OCI-LY7 (cell line): ENCODE measurements at regions of chr17 and their contacts with region 1.

Region 1: DNA sequence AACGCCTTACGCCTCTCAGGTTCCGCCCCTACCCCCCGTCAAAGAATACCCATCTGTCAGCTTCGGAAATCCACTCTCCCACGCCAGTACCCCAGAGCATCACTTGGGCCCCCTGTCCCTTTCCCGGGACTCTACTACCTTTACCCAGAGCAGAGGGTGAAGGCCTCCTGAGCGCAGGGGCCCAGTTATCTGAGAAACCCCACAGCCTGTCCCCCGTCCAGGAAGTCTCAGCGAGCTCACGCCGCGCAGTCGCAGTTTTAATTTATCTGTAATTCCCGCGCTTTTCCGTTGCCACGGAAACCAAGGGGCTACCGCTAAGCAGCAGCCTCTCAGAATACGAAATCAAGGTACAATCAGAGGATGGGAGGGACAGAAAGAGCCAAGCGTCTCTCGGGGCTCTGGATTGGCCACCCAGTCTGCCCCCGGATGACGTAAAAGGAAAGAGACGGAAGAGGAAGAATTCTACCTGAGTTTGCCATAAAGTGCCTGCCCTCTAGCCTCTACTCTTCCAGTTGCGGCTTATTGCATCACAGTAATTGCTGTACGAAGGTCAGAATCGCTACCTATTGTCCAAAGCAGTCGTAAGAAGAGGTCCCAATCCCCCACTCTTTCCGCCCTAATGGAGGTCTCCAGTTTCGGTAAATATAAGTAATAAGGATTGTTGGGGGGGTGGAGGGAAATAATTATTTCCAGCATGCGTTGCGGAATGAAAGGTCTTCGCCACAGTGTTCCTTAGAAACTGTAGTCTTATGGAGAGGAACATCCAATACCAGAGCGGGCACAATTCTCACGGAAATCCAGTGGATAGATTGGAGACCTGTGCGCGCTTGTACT is at the start of gene BRCA1:
- DNase-seq: peak; percentile 100
- H3K4me3 ChIP-seq: peak within 1 kb of the TSS; percentile 88
- H3K27ac ChIP-seq: peak within 1 kb of the TSS; percentile 91
- H3K4me1 ChIP-seq: peaks cover 44% of the 10 kb centered on the region
- CTCF ChIP-seq: no peak
- total RNA-seq, gene BRCA1: 112 and 134 TPM in 2 replicates

Region 2: DNA sequence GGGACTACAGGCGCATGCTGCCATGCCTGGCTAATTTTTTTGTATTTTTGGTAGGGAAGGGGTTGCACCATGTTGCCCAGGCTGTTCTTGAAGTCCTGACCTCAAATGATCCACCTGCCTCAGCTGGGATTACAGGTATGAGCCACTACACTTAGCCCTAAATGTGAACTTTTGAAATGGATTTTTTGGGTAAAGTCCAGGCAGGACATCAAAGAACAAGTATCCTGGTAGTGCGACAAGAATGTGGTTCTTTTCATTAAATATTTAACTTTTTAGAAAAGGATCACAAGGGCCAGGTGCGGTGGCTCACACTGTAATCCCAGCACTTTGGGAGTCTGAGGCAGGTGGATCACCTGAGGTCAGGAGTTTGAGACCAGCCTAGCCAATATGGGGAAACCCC is 30.3 kb after region 1 on chr17:
- CTCF ChIA-PET with region 1: no interaction called
- POLR2A ChIA-PET with region 1: interaction called, 4 read pairs
- intact Hi-C with region 1: loop called (anchors 1 kb)
- DNase-seq: no peak
- H3K4me3 ChIP-seq: no peak overlapping the region
- H3K27ac ChIP-seq: no peak overlapping the region
- H3K4me1 ChIP-seq: no peaks in the 10 kb centered on the region
- CTCF ChIP-seq: no peak

Region 3: GRCh38 chr17:43170766-43171585 is 45.6 kb after region 1 on chr17 and contains the start of gene NBR1:
- CTCF ChIA-PET with region 1: no interaction called
- POLR2A ChIA-PET with region 1: interaction called, 5 read pairs
- intact Hi-C with region 1: loop called (anchors 1 kb)
- DNase-seq: peak; percentile 99
- H3K4me3 ChIP-seq: peak within 1 kb of the TSS; percentile 82
- H3K27ac ChIP-seq: peak within 1 kb of the TSS; percentile 82
- H3K4me1 ChIP-seq: peaks cover 19% of the 10 kb centered on the region
- CTCF ChIP-seq: peak; percentile 66
- total RNA-seq, gene NBR1: 15.2 and 16.2 TPM in 2 replicates

Region 4: DNA sequence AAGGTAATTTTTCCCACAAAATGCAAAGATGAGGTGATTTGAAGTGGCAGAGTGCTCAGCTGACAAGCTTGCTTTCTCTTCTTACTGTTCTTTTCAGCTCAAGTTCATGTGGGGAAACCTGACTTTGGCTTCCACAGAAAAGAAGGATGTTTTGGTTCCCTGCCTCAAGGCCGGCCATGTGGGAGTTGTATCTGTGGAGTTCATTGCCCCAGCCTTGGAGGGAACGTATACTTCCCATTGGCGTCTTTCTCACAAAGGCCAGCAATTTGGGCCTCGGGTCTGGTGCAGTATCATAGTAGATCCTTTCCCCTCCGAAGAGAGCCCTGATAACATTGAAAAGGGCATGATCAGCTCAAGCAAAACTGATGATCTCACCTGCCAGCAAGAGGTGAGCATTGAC is 67.9 kb after region 1 on chr17:
- CTCF ChIA-PET with region 1: no interaction called
- POLR2A ChIA-PET with region 1: no interaction called
- intact Hi-C with region 1: no loop called
- DNase-seq: no peak
- H3K4me3 ChIP-seq: no peak overlapping the region
- H3K27ac ChIP-seq: no peak overlapping the region
- H3K4me1 ChIP-seq: no peaks in the 10 kb centered on the region
- CTCF ChIP-seq: no peak